ENCODE measurements at regions of chr3 and their contacts with region 1.

Region 1: DNA sequence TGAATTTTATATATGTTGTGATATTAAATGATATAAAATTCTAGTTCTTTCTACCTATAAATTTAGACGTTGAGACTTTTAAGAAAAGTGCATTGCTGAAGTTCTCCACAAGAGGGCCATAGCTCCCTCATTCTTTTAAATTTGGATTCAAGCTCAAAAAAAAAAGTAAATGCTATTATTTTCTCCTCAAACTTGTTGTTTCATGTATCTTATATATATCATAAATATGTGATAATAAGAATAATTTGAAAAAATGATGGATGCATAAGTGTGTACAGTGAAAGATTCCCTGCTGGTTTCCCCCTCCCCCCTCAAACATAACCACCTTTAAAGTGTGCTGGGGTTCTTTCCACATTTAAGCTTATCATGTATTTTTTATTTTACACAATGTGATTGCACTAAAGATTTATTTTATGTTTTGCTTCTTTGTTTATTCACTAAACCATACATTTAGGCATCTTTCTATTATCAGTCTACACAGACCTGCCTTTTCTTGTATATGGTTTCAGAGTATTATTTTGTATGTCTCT is 769.4 kb upstream of the GOLIM4 start:
- DNase-seq: peak; percentile 11
- ATAC-seq: no peak
- H3K4me3 ChIP-seq: no peak overlapping the region
- H3K4me3 Mint-ChIP-seq: no peak overlapping the region
- H3K27ac ChIP-seq: no peak overlapping the region
- H3K27ac Mint-ChIP-seq: no peak overlapping the region
- H3K4me1 ChIP-seq: no peaks in the 10 kb centered on the region
- H3K4me1 Mint-ChIP-seq: no peaks in the 10 kb centered on the region
- H3K27me3 ChIP-seq: no peaks in the 10 kb centered on the region
- H3K27me3 Mint-ChIP-seq: peaks cover 4% of the 10 kb centered on the region
- CTCF ChIP-seq: peak; percentile 82

Region 2: DNA sequence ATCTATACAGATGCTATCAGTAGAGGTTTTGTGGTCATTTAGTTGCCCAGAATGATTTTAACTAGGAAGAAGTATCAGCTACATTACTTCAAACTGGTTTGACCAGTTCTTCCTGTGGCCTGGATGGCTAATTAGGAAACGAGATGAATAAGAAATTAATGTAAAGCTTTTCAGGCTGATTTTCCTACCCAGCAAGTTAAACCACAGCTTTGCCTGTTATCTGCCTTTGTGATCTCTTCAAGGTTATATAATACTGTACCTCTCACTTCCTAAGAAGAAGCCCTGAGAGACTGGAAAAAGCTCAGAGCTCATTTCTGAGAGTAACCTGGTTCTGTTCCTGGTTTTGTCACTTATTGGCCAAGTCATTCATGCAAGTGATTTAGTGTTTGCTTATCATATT is 12.8 kb after region 1 on chr3:
- CTCF ChIA-PET with region 1: interaction called, 10 read pairs
- POLR2A ChIA-PET with region 1: no interaction called
- intact Hi-C with region 1: no loop called
- DNase-seq: no peak
- ATAC-seq: no peak
- H3K4me3 ChIP-seq: no peak overlapping the region
- H3K4me3 Mint-ChIP-seq: no peak overlapping the region
- H3K27ac ChIP-seq: no peak overlapping the region
- H3K27ac Mint-ChIP-seq: no peak overlapping the region
- H3K4me1 ChIP-seq: no peaks in the 10 kb centered on the region
- H3K4me1 Mint-ChIP-seq: no peaks in the 10 kb centered on the region
- H3K27me3 ChIP-seq: no peaks in the 10 kb centered on the region
- H3K27me3 Mint-ChIP-seq: peaks cover 4% of the 10 kb centered on the region
- CTCF ChIP-seq: no peak

Region 3: GRCh38 chr3:169286214-169286613 is 421.1 kb after region 1 on chr3:
- CTCF ChIA-PET with region 1: no interaction called
- POLR2A ChIA-PET with region 1: no interaction called
- intact Hi-C with region 1: no loop called
- DNase-seq: no peak
- ATAC-seq: no peak
- H3K4me3 ChIP-seq: no peak overlapping the region
- H3K4me3 Mint-ChIP-seq: no peak overlapping the region
- H3K27ac ChIP-seq: no peak overlapping the region
- H3K27ac Mint-ChIP-seq: no peak overlapping the region
- H3K4me1 ChIP-seq: no peaks in the 10 kb centered on the region
- H3K4me1 Mint-ChIP-seq: no peaks in the 10 kb centered on the region
- H3K27me3 ChIP-seq: no peaks in the 10 kb centered on the region
- H3K27me3 Mint-ChIP-seq: no peaks in the 10 kb centered on the region
- CTCF ChIP-seq: no peak

Region 4: DNA sequence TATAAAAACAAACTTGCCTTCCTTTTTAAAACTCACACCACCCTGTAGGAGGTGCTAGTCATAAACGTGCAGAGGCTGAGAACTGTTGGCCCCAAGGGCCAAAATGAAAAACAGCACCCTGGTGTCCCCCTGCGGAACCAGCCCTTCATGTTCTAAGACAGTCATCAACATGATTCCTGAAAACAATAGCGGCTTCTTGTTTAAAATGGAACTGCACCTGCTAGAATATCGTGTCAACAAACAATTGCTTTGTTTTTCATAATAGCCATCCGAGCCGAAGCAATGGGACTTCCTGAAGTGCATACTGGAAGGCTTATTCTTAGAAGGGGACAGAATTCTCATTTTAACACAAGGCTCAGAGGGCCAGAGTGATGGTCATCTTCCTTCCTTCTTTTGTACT is 754.7 kb after region 1 on chr3:
- CTCF ChIA-PET with region 1: no interaction called
- POLR2A ChIA-PET with region 1: no interaction called
- intact Hi-C with region 1: no loop called
- DNase-seq: no peak
- ATAC-seq: no peak
- H3K4me3 ChIP-seq: no peak overlapping the region
- H3K4me3 Mint-ChIP-seq: no peak overlapping the region
- H3K27ac ChIP-seq: no peak overlapping the region
- H3K27ac Mint-ChIP-seq: no peak overlapping the region
- H3K4me1 ChIP-seq: no peaks in the 10 kb centered on the region
- H3K4me1 Mint-ChIP-seq: no peaks in the 10 kb centered on the region
- H3K27me3 ChIP-seq: no peaks in the 10 kb centered on the region
- H3K27me3 Mint-ChIP-seq: no peaks in the 10 kb centered on the region
- CTCF ChIP-seq: no peak